HepG2 (cell line): ENCODE measurements at regions of chr16 and their contacts with region 1.

Region 1: GRCh38 chr16:648781-649589 is at the start of gene WDR90:
- DNase-seq: peak; percentile 91
- ATAC-seq: peak; percentile 73
- H3K4me3 ChIP-seq: peak within 1 kb of the TSS; percentile 71 to 79 (median 71)
- H3K27ac ChIP-seq: peak within 1 kb of the TSS; percentile 93
- H3K4me1 ChIP-seq: peaks cover 79% of the 10 kb centered on the region
- H3K27me3 ChIP-seq: no peaks in the 10 kb centered on the region
- CTCF ChIP-seq: peak; percentile 29; the same call in 1 of the 2 replicates
- EP300 ChIP-seq: 0 out of 4 replicates have a peak, but pooled peaks of 1 of the 2 experiments have one; percentile 42
- POLR2A ChIP-seq: peak; percentile 61 to 74
- RAD21 ChIP-seq: peak; percentile 54; the same call in 1 of the 2 replicates
- total RNA-seq, gene WDR90: 10.2 and 28.9 TPM in 2 replicates

Region 2: DNA sequence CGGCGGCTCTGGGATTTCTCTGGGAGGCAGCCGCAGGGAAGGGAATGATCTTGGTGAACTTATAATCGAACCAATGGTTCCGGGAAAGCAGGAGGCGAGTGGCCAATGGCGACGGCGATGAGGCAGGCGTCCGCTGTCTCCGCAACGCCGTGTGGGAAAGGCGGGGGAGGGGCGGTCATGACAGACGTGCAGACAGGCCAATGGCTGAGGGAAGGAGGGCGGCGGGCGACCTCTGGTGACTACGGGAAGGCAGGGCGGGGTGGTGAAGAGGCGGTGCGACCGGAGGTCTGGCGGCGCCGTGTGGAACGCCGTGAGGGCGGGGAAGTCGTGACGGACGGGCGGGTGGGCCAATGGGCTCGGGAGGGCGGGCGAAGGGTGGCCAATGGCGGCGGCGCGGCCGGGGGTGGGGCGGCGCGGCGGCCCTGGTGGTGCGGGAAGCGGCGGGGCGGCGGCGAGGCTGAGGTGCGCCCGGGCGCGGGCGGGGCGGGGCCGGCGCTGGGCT is 59.3 kb before region 1 on chr16 and contains the start of gene RAB40C:
- CTCF ChIA-PET with region 1: no interaction called
- POLR2A ChIA-PET with region 1: no interaction called
- in situ Hi-C with region 1: no loop called
- intact Hi-C with region 1: loop called (anchors 10 kb)
- DNase-seq: peak; percentile 93
- ATAC-seq: peak; percentile 79
- H3K4me3 ChIP-seq: peak within 1 kb of the TSS; percentile 94 to 96 (median 96)
- H3K27ac ChIP-seq: peak within 1 kb of the TSS; percentile 99
- H3K4me1 ChIP-seq: peaks cover 68% of the 10 kb centered on the region
- H3K27me3 ChIP-seq: no peaks in the 10 kb centered on the region
- CTCF ChIP-seq: peak; percentile 50
- EP300 ChIP-seq: no peak
- POLR2A ChIP-seq: peak in 1 of 2 experiments; percentile 57; a peak in 2 of 4 replicates
- RAD21 ChIP-seq: no peak
- total RNA-seq, gene RAB40C: 8.2 and 11.5 TPM in 2 replicates

Region 3: DNA sequence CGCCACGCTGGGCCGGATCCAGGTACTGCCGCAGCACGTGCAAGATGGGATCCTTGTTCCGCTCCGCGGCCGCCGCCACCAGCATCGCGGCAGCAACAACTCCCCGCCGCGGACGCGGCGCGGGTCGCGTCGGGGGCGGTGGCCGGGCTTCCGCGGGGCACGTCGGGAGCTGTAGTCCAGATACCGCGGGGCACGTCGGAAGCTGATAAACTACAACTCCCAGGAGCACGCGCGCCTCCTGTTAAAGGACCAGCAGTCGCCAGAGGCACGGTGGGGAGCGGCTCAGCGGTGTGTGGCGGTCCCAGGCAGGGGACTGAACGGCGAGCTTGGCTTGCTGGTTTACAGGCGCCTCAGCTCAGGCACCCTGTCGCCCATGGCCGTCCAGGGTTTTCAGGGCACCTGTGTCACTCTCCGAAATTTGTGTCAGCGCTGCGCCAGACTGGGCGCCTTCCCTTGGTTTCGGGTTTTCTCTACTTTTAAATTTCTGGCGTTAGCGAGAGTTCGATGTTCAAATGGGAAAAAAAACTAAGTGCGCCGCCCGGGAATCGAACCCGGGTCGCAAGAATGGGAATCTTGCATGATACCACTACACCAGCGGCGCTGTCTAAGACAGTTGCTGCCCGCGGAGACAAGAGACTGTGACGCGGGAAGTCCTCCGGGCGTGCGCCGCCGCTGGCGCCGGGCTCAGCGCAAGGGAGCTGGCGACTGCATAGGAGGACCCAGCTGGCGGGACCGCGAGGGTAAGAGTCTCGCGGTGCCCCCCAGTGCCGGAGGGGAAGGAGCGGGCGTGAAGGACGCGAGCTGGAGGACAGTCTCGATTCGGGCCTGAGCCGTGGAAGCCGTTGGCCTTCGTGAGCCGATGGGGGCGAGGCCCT is 12.5 kb before region 1 on chr16 and contains the start of gene METTL26:
- CTCF ChIA-PET with region 1: no interaction called
- POLR2A ChIA-PET with region 1: interaction called, 13 read pairs
- in situ Hi-C with region 1: no loop called
- intact Hi-C with region 1: no loop called
- DNase-seq: peak; percentile 92
- ATAC-seq: peak; percentile 80
- H3K4me3 ChIP-seq: peak within 1 kb of the TSS; percentile 90 to 94 (median 92)
- H3K27ac ChIP-seq: peak within 1 kb of the TSS; percentile 88
- H3K4me1 ChIP-seq: peaks cover 37% of the 10 kb centered on the region
- H3K27me3 ChIP-seq: no peaks in the 10 kb centered on the region
- CTCF ChIP-seq: peak; percentile 29; the same call in 1 of the 2 replicates
- EP300 ChIP-seq: no peak
- POLR2A ChIP-seq: peak; percentile 72 to 95
- RAD21 ChIP-seq: peak; percentile 69
- total RNA-seq, gene METTL26: 70.1 and 75.1 TPM in 2 replicates

Region 4: GRCh38 chr16:679814-680622 is 31.0 kb after region 1 on chr16 and contains the start of gene STUB1:
- CTCF ChIA-PET with region 1: no interaction called
- POLR2A ChIA-PET with region 1: interaction called, 15 read pairs
- in situ Hi-C with region 1: no loop called
- intact Hi-C with region 1: no loop called
- DNase-seq: peak; percentile 76
- ATAC-seq: peak; percentile 41
- H3K4me3 ChIP-seq: peak within 1 kb of the TSS; percentile 72 to 88 (median 85)
- H3K27ac ChIP-seq: peak within 1 kb of the TSS; percentile 80
- H3K4me1 ChIP-seq: peaks cover 38% of the 10 kb centered on the region
- H3K27me3 ChIP-seq: no peaks in the 10 kb centered on the region; a peak in 1 of 5 replicates
- CTCF ChIP-seq: no peak
- EP300 ChIP-seq: no peak
- POLR2A ChIP-seq: peak; percentile 48 to 73; a peak in 3 of 4 replicates
- RAD21 ChIP-seq: peak; percentile 50; the same call in 1 of the 2 replicates
- total RNA-seq, gene STUB1: 78.2 and 79.9 TPM in 2 replicates